ENCODE measurements at regions of chr11 and their contacts with region 1.

Region 1: DNA sequence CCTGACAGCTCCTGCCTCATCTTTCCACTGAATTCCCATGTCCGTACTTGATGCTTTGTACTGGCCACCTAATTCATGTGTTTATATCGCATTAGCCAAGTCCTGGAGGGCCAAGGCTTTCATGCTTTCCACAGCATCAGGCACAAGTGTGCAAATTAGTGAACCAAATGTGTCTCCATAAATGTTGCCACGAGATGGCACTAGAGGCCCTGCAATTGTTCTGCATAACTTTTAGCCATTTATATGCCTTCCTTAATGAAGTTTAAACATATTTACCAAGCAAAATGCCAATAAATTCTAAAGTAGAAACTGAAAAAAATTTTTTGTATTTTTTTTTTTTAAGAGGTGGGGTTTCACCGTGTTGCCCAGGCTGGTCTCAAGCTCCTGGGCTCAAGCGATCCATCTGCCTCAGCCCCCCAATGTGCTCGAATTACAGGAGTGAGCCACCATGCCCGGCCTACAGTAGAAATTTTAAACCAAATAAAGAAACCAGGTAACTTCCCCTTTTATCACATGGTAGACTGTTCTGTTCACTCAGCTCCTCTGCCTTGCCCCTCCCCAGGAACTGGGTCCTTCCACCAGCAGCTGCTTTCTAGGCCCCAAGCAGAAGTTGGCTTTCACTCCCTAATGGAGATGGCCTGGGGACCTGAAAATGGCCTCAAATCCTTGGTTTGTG is 20.8 kb upstream of the IL18BP start:
- DNase-seq: peak; percentile 74
- ATAC-seq: peak; percentile 68
- H3K4me3 Mint-ChIP-seq: no peak overlapping the region
- H3K27ac Mint-ChIP-seq: no peak overlapping the region
- H3K4me1 Mint-ChIP-seq: no peaks in the 10 kb centered on the region
- H3K27me3 Mint-ChIP-seq: no peaks in the 10 kb centered on the region

Region 2: DNA sequence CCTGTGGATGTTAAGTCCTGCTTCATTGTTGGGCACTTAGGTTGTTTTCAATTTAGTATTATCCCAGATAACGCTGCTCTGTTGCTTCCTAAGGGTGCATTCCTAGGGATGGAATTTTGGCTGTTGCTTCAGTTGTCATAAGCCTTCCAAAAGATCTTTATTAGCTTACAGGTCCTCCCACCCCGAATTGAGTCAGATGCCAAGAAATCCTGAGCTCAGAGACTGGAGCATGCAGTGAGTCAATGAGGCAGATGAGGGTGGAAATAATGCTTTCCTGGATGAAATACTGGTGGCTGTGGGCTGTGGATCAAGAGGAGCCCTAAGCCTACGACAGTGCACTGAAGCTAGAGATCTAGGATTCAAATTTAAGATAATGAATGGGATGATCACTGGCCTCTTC is 10.2 kb after region 1 on chr11:
- CTCF ChIA-PET with region 1: interaction called, 22 read pairs
- DNase-seq: no peak
- ATAC-seq: no peak
- H3K4me3 Mint-ChIP-seq: no peak overlapping the region
- H3K27ac Mint-ChIP-seq: no peak overlapping the region
- H3K4me1 Mint-ChIP-seq: peaks cover 23% of the 10 kb centered on the region
- H3K27me3 Mint-ChIP-seq: no peaks in the 10 kb centered on the region

Region 3: GRCh38 chr11:72004936-72005500 is 27.1 kb after region 1 on chr11:
- CTCF ChIA-PET with region 1: interaction called, 11 read pairs
- DNase-seq: no peak
- ATAC-seq: no peak
- H3K4me3 Mint-ChIP-seq: no peak overlapping the region
- H3K27ac Mint-ChIP-seq: no peak overlapping the region
- H3K4me1 Mint-ChIP-seq: no peaks in the 10 kb centered on the region
- H3K27me3 Mint-ChIP-seq: no peaks in the 10 kb centered on the region

Region 4: GRCh38 chr11:72030472-72031045 is 52.7 kb after region 1 on chr11:
- CTCF ChIA-PET with region 1: interaction called, 15 read pairs
- DNase-seq: no peak
- ATAC-seq: no peak
- H3K4me3 Mint-ChIP-seq: no peak overlapping the region
- H3K27ac Mint-ChIP-seq: no peak overlapping the region
- H3K4me1 Mint-ChIP-seq: peaks cover 11% of the 10 kb centered on the region
- H3K27me3 Mint-ChIP-seq: no peaks in the 10 kb centered on the region

Region 5: GRCh38 chr11:72141066-72141465 is 163.2 kb after region 1 on chr11:
- CTCF ChIA-PET with region 1: interaction called, 29 read pairs
- DNase-seq: peak; percentile 78
- ATAC-seq: peak; percentile 78
- H3K4me3 Mint-ChIP-seq: peak overlapping the region; percentile 0
- H3K27ac Mint-ChIP-seq: peak overlapping the region; percentile 67
- H3K4me1 Mint-ChIP-seq: peaks cover 45% of the 10 kb centered on the region
- H3K27me3 Mint-ChIP-seq: no peaks in the 10 kb centered on the region